Right ventricle myocardium superior (tissue), 1 donor: ENCODE measurements at regions of chr1 and their contacts with region 1.

Region 1: GRCh38 chr1:236893626-236894545 is 98.8 kb downstream of the MTR start:
- DNase-seq: no peak
- ATAC-seq: no peak

Region 2: DNA sequence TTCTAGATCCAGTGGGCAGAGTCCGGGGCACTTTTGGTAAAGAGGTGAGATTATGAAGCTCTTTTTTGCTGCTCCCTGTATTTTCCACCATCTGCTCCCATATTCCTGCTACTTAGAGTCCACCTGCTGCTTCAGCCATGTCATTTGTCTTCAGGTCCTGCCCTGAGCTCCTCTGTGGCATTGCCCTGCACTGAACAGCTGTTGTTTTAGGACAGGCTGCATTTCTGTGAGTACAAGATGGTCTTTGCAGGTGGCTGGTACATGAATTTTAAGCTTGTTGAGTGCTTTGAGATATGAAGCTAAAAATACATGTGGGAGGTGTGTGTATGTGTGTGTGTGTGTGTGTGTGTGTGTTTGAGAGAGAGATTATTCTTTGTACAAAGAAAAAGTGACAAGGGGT is 88.5 kb after region 1 on chr1:
- intact Hi-C with region 1: loop called (anchors 5 kb)
- DNase-seq: no peak
- ATAC-seq: peak; percentile 82

Region 3: GRCh38 chr1:237041795-237042525 is 148.1 kb after region 1 on chr1 and contains the start of gene RYR2:
- intact Hi-C with region 1: loop called (anchors 10 kb)
- DNase-seq: peak; percentile 62
- ATAC-seq: peak; percentile 58
- total RNA-seq, gene RYR2: 744 TPM

Region 4: DNA sequence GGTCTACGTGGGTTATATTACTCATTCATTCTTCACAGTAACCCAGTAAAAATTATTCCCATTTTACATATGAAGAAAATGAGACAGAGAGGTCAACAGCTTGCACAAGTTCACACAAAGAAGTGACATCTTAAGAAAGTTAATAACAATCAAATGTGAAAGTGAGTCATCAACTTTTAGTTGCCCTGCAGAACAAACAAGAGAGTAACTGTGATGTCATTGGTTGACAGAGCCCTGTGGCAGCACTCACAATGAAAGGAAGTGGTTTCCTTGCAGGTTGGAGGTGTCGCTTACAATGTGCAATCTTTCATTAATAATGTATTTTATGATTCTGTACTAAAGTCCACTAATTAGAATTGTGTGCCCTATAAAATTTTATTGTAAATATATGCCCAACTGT is 517.7 kb after region 1 on chr1:
- intact Hi-C with region 1: no loop called
- DNase-seq: no peak
- ATAC-seq: no peak